Naive thymus-derived CD4-positive, alpha-beta T cell (primary cell): ENCODE measurements at regions of chr2 and their contacts with region 1.

Region 1: GRCh38 chr2:130391058-130391871 is 35.4 kb downstream of the PTPN18 start:
- DNase-seq: peak; percentile 37 to 77 (median 56)
- ATAC-seq: peak; percentile 94
- H3K4me3 ChIP-seq: peak overlapping the region; percentile 56
- H3K4me3 Mint-ChIP-seq: peak overlapping the region; percentile 80 to 94 (median 88)
- H3K27ac ChIP-seq: peak overlapping the region; percentile 32
- H3K27ac Mint-ChIP-seq: peak overlapping the region; percentile 62 to 97 (median 87)
- H3K4me1 ChIP-seq: peaks cover 5 to 8% of the 10 kb centered on the region in 2 donors
- H3K4me1 Mint-ChIP-seq: peaks cover 8 to 20% (median 18%) of the 10 kb centered on the region in 7 donors
- H3K27me3 ChIP-seq: no peaks in the 10 kb centered on the region
- H3K27me3 Mint-ChIP-seq: peaks cover 0 to 15% (median 9%) of the 10 kb centered on the region in 5 donors

Region 2: DNA sequence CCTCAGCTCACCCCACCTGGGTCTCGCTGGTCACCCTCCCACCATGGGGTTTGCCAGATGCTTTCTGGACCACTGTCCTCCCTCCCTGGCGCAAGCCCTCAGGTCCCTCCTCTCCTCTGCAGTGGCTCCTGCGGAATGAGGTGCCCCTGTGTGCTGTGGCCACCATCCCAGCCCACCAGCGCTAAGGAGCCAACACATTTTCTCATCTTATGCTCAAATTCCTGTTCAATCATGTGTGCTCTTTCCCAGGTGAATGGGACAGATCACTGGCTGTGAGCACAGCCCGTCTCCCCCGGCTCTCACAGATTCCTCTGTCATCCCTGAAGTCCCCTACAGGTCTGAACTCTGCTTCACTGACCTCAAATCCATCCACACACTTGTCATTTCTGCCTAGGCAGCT is 231.1 kb before region 1 on chr2:
- CTCF ChIA-PET with region 1: no interaction called
- POLR2A ChIA-PET with region 1: no interaction called
- intact Hi-C with region 1: no loop called
- DNase-seq: no peak
- ATAC-seq: no peak
- H3K4me3 ChIP-seq: no peak overlapping the region
- H3K4me3 Mint-ChIP-seq: no peak overlapping the region
- H3K27ac ChIP-seq: no peak overlapping the region
- H3K27ac Mint-ChIP-seq: no peak overlapping the region
- H3K4me1 ChIP-seq: no peaks in the 10 kb centered on the region
- H3K4me1 Mint-ChIP-seq: peaks cover 0 to 17% (median 0%) of the 10 kb centered on the region in 7 donors
- H3K27me3 ChIP-seq: no peaks in the 10 kb centered on the region
- H3K27me3 Mint-ChIP-seq: no peaks in the 10 kb centered on the region

Region 3: DNA sequence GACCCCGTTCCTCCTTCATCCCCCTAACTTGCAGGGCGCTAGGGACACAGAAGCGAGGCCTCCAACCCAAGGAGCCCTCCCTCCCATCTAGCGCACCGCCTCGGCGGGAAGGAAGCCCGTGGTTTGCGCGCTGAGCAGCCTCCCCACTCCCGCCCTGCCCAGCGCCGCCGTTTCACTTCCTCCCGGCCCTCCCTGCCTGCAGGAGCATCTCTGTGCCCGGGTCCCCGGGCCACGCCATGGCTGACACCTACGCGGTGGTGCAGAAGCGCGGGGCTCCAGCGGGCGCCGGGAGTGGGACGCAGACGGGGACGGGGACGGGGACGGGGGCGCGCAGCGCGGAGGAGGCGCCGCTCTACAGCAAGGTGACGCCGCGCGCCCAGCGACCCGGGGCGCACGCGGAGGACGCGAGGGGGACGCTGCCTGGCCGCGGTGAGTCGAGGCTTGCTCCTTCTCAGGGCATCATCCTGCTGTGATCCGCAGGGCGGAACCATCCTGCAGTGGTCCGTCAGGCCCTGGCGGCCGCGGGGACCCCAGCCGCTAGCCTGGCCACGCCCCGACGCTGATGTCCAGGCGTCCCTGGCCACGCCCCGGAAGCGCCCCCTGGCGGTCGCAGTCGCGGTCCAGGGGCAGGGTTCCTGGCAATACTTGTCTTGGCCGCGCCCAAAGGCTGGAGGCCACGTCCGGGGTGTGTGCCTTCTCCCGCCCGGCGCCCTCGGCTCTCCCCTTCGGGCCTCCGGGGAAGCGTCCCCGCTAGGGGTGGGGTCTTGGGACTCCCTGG is 19.0 kb before region 1 on chr2:
- CTCF ChIA-PET with region 1: interaction called, 3 read pairs
- POLR2A ChIA-PET with region 1: no interaction called
- intact Hi-C with region 1: loop called (anchors 1 kb)
- DNase-seq: peak; percentile 49 to 92 (median 71)
- ATAC-seq: peak; percentile 86
- H3K4me3 ChIP-seq: peak overlapping the region; percentile 83
- H3K4me3 Mint-ChIP-seq: peak overlapping the region; percentile 87 to 99 (median 94)
- H3K27ac ChIP-seq: peak overlapping the region; percentile 71
- H3K27ac Mint-ChIP-seq: peak overlapping the region; percentile 88 to 97 (median 95)
- H3K4me1 ChIP-seq: peaks cover 25 to 34% of the 10 kb centered on the region in 2 donors
- H3K4me1 Mint-ChIP-seq: peaks cover 47 to 69% (median 65%) of the 10 kb centered on the region in 7 donors
- H3K27me3 ChIP-seq: no peaks in the 10 kb centered on the region
- H3K27me3 Mint-ChIP-seq: no peaks in the 10 kb centered on the region

Region 4: GRCh38 chr2:130744287-130745117 is 353.2 kb after region 1 on chr2:
- CTCF ChIA-PET with region 1: no interaction called
- POLR2A ChIA-PET with region 1: no interaction called
- intact Hi-C with region 1: no loop called
- DNase-seq: no peak
- ATAC-seq: no peak
- H3K4me3 ChIP-seq: no peak overlapping the region
- H3K4me3 Mint-ChIP-seq: no peak overlapping the region
- H3K27ac ChIP-seq: no peak overlapping the region
- H3K27ac Mint-ChIP-seq: no peak overlapping the region
- H3K4me1 ChIP-seq: no peaks in the 10 kb centered on the region
- H3K4me1 Mint-ChIP-seq: no peaks in the 10 kb centered on the region
- H3K27me3 ChIP-seq: no peaks in the 10 kb centered on the region
- H3K27me3 Mint-ChIP-seq: peaks cover 13 to 44% (median 21%) of the 10 kb centered on the region in 5 donors